Right lobe of liver (tissue), 6 donors: ENCODE measurements at regions of chr17 and their contacts with region 1.

Region 1: GRCh38 chr17:58329035-58329809 is 627 bp upstream of the TSPOAP1 start:
- DNase-seq: peak in 2 of 3 donors; percentile 47 to 73
- ATAC-seq: peak; percentile 30 to 48 (median 37)
- H3K4me3 ChIP-seq: no peak overlapping the region
- H3K27ac ChIP-seq: peak overlapping the region in 2 of 3 donors; percentile 18 to 47
- H3K4me1 ChIP-seq: peaks cover 0 to 4% (median 0%) of the 10 kb centered on the region in 4 donors
- H3K27me3 ChIP-seq: no peaks in the 10 kb centered on the region
- CTCF ChIP-seq: peak in 3 of 4 donors; percentile 20 to 36 (median 21)
- POLR2A ChIP-seq: no peak

Region 2: DNA sequence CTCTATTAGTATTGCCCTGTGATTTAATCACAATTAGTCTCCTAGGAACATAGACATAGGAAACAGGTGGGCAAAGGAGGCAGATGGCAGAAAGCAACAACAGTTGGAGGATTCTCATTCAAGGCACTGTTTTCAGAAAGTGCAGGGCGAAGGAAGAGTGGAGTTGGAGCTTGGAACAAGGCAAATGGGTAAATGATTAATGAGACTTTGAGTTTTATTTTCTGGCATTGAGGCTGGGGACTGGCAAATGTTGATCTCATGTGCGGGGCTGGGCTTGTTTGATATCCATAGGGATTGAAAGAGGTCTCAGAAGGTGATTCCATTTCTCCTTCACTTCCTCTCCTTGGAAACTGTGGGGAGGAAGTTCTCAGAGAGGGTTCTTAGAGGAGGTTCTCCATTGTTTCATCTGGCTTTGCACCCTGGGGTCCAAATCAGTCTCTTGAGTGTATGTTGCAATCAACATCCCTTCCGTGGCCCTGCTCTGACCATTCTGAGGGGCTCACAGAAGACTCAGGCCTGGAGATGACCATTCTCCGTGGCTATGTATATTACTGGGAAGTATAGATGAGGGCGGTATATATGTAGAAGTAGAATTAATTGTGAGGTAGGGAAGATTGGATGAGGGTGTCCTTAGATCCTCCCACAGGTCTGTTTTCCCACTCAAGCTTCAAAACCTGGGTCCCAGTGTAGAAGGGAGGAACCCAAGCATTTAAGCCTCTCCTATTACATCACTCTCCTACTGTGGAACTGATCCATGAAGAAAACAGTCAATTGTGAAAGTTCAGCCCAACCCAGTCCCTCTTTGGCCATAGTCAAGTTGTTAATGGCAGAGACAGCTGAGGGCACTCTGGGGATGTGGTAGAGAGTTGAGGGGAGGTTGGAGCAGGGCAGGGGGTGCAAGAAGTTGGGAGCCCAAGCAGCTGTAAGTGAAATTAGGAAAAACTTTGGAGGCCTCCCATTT is 285.7 kb before region 1 on chr17:
- intact Hi-C with region 1: no loop called
- DNase-seq: no peak
- ATAC-seq: peak; percentile 74 to 90 (median 85)
- H3K4me3 ChIP-seq: no peak overlapping the region
- H3K27ac ChIP-seq: peak overlapping the region in 1 of 3 donors; percentile 30
- H3K4me1 ChIP-seq: peaks cover 0 to 15% (median 5%) of the 10 kb centered on the region in 4 donors
- H3K27me3 ChIP-seq: no peaks in the 10 kb centered on the region
- CTCF ChIP-seq: no peak
- POLR2A ChIP-seq: no peak

Region 3: DNA sequence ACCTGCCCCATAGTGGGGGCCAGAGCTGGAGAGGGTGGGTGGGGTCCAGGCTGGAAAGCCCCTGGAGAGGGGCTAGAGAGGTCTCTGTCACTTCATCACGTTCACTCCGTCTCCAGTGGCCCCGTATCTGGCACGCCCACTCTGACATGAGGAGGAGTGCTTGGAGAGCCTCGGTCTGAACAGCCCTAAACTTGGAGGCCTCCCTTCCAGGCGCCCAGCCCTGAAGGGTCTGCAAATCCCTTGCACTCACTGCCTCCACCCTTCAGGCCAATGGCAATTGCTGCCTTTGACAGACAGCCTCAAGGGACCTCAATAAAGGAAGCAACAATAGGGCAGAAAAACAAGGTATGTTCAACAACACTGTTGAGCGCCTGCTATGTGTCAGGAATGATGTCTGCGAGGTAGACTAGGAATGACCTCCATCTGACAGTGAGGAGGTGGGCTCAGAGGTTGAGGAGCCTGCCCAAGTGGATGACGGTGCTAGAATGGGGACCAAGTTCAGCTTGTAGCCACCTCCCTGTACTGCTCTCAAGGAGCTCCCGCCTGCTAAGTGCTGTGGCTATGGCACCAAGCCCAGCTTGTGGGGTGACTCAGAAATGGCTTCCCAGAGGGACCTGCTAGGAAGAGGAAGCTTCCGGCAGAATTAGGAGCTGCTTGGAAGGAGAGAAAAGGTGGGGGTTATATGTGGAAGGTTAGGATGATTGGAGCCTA is 139.6 kb before region 1 on chr17:
- intact Hi-C with region 1: no loop called
- DNase-seq: no peak
- ATAC-seq: no peak
- H3K4me3 ChIP-seq: no peak overlapping the region
- H3K27ac ChIP-seq: no peak overlapping the region
- H3K4me1 ChIP-seq: no peaks in the 10 kb centered on the region
- H3K27me3 ChIP-seq: no peaks in the 10 kb centered on the region
- CTCF ChIP-seq: no peak
- POLR2A ChIP-seq: no peak

Region 4: DNA sequence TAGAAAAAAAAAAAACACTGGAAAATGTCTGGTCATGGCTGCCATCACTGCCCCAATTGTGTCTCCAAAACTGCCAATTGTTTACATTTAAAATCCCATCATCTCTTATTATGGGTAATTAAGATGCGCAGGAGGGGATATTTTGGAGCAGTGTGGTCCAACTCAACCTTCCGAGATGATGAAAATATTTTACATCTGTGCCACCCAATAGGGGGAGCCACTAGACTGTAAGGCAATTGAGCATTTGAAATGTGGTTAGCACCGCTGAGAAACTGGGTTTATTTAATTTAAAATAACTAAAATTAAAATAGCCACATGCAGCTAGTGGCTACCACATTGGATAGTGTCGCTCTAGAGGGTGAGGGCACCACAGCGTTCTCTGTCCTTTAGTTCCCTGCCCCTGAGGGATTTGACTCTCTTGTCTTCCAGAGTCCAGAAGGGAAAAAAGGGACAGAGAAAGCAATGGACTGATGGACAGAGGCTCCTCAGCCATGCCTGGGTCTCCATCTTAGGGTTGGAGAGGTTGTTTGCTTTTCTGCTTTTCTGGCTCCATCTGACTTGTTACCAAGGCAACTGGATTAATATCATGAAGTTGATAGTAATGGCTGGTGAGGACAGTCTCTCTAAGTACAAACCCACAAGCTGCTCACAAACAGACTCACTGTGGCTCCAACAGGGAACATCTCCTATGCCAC is 52.0 kb before region 1 on chr17:
- intact Hi-C with region 1: no loop called
- DNase-seq: no peak
- ATAC-seq: no peak
- H3K4me3 ChIP-seq: no peak overlapping the region
- H3K27ac ChIP-seq: no peak overlapping the region
- H3K4me1 ChIP-seq: peaks cover 0 to 10% (median 0%) of the 10 kb centered on the region in 4 donors
- H3K27me3 ChIP-seq: no peaks in the 10 kb centered on the region
- CTCF ChIP-seq: peak; percentile 22 to 47 (median 29)
- POLR2A ChIP-seq: no peak

Region 5: GRCh38 chr17:58377093-58377601 is 47.9 kb after region 1 on chr17:
- intact Hi-C with region 1: loop called in 1 of 2 experiments (anchors 10 kb)
- DNase-seq: no peak
- ATAC-seq: no peak
- H3K4me3 ChIP-seq: no peak overlapping the region
- H3K27ac ChIP-seq: no peak overlapping the region
- H3K4me1 ChIP-seq: peaks cover 0 to 25% (median 14%) of the 10 kb centered on the region in 4 donors
- H3K27me3 ChIP-seq: no peaks in the 10 kb centered on the region
- CTCF ChIP-seq: no peak
- POLR2A ChIP-seq: no peak